B cell (primary cell): ENCODE measurements at regions of chr11 and their contacts with region 1.

Region 1: DNA sequence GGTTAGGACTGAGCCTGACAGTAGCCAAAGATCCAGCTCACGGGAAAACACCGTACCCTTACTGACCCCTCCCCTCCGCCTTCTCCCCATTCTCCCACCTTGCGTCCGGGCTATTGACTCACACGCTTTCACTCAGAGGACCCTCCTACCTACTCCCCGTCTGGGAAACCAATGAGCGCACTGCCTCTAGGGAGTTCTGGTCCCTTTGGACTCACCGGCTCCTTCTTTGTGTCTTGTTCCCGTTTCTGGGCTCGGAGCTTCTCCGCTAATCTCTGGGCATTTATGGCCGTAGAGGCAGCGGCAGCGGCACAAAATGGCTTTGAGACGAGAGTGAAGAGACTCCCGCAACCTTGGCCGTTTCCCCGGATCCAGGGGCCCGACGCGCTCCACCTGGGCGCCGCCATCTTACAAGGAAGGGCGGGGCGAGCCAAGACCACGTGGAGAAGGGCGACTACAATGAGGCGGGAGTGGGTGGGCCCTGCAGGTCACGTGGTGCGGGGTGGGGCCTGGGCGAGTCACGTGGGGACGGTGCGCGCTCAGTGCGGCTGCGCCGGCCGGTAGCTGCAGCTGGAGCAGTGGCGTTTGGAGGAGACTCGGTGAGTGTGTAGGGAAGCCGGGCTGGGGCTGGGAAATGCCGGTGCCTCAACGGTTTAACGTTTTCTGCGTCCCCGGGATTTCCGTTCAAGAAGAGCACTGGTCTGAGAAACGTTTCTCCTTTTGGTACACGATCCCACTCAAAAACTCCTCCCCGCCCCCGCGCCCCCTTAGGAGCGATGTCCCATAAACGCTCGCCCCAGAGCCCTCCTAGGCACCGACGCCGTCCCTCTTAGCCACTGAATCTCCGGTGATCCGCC is at the starts of genes FAM118B and RPUSD4:
- DNase-seq: peak; percentile 97
- ATAC-seq: peak; percentile 96
- H3K4me3 ChIP-seq: peak within 1 kb of the TSS; percentile 89 to 100 (median 99)
- H3K4me3 Mint-ChIP-seq: peak within 1 kb of the TSS; percentile 99
- H3K27ac ChIP-seq: peak within 1 kb of the TSS; percentile 72 to 86
- H3K27ac Mint-ChIP-seq: peak within 1 kb of the TSS; percentile 95
- H3K4me1 ChIP-seq: peaks cover 16 to 18% of the 10 kb centered on the region in 2 donors
- H3K4me1 Mint-ChIP-seq: peaks cover 29% of the 10 kb centered on the region
- H3K27me3 ChIP-seq: no peaks in the 10 kb centered on the region
- H3K27me3 Mint-ChIP-seq: no peaks in the 10 kb centered on the region
- CTCF ChIP-seq: no peak
- total RNA-seq, gene FAM118B: 12.8 and 14.1 TPM in 2 replicates
- total RNA-seq, gene RPUSD4: 48.8 and 50.4 TPM in 2 replicates

Region 2: GRCh38 chr11:125625630-125626287 is 585.7 kb before region 1 on chr11:
- CTCF ChIA-PET with region 1: no interaction called
- POLR2A ChIA-PET with region 1: no interaction called
- intact Hi-C with region 1: loop called (anchors 1 kb)
- DNase-seq: peak; percentile 90
- ATAC-seq: peak; percentile 90
- H3K4me3 ChIP-seq: peak overlapping the region; percentile 81 to 96 (median 94)
- H3K4me3 Mint-ChIP-seq: peak overlapping the region; percentile 95
- H3K27ac ChIP-seq: peak overlapping the region; percentile 97 to 98
- H3K27ac Mint-ChIP-seq: peak overlapping the region; percentile 98
- H3K4me1 ChIP-seq: peaks cover 11 to 18% of the 10 kb centered on the region in 2 donors
- H3K4me1 Mint-ChIP-seq: peaks cover 14% of the 10 kb centered on the region
- H3K27me3 ChIP-seq: no peaks in the 10 kb centered on the region
- H3K27me3 Mint-ChIP-seq: no peaks in the 10 kb centered on the region
- CTCF ChIP-seq: no peak

Region 3: DNA sequence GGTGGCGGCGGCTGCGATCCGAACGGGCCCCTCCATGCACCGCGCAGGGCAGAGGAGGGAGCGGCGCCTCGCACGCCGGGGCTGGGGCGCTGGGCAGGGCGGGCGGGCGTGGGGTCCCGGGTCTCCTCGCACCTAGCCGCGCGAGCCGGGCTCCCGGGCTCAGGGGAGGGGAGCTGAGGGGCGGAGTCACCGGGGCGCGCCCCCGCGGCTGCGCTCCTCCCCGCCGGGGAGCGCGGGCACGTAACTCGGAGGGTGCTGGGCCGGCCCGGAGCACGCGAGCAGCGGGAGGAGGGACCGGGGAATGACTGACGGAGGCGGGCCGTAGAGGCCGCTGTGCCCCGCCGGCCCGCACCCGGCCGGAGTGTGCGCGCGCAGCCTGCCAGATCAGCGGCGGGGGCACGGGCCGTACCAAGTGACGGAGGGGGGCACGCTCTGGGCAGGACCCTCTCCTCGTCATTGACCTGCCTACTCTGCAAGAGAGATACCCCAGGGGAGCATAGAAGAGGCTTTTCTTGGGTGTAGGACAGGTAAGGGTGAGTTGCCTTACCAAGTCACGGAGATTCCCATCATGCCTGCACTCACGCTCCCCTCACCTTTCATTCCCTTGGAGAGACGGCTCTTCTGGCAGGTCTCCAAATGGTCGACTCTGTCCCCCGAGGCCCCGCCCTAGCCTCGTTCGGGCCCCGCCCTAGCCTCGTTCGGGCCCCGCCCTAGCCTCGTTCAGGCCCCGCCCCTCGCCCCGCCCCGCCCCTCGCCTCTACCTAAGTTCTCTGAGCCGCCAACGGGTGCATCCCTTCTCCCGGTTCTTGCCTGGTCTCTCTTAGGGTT is 148.6 kb before region 1 on chr11 and contains the start of gene CDON:
- CTCF ChIA-PET with region 1: no interaction called
- POLR2A ChIA-PET with region 1: no interaction called
- intact Hi-C with region 1: loop called (anchors 1 kb)
- DNase-seq: peak; percentile 91
- ATAC-seq: peak; percentile 85
- H3K4me3 ChIP-seq: peak within 1 kb of the TSS; percentile 47 to 69 (median 62)
- H3K4me3 Mint-ChIP-seq: peak within 1 kb of the TSS; percentile 84
- H3K27ac ChIP-seq: no peak within 1 kb of the TSS
- H3K27ac Mint-ChIP-seq: peak within 1 kb of the TSS; percentile 62
- H3K4me1 ChIP-seq: peaks cover 8 to 10% of the 10 kb centered on the region in 2 donors
- H3K4me1 Mint-ChIP-seq: peaks cover 10% of the 10 kb centered on the region
- H3K27me3 ChIP-seq: peaks cover 0 to 29% (median 18%) of the 10 kb centered on the region in 4 experiments
- H3K27me3 Mint-ChIP-seq: peaks cover 52% of the 10 kb centered on the region
- CTCF ChIP-seq: no peak
- total RNA-seq, gene CDON: not detected in 2 replicates

Region 4: DNA sequence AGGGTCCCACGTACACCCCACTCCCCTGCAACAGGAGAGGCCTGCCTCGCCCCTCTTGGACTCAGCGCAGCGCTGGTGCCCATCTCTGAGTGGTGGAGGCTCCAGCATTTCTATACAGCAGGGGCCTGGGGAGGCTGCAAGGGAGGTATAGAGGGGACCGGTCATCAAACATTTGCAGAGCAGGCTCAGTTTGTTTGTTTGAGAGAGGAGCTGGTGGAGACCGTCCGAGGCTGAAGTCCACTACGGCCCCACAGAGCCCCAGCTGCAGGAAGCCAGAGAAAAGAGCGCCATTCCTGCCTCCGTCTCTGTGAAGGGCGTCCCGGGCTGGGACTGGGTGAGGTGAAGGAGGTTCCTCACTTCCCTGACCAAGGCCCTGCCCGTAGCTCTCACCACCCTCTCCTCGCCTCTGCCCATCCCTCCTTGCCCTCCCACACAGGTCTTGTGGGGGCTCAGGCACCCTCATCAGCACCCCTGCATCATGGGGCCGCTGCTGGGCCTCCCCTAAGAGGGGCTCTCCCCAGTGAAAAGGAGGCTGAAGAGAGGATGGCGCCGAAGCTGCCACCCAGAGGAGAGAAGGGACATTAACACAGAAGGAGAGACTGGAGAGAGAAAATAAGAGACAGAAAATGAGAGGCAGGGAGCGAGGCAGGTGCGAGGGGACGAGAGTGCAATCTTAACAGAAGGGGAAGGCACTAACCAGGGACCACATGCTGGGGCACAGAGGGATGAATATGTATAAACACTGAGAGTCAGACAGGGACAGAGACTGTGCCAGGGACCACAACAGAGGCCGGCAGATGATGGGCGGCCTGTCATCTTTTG is 24.5 kb before region 1 on chr11:
- CTCF ChIA-PET with region 1: no interaction called
- POLR2A ChIA-PET with region 1: no interaction called
- intact Hi-C with region 1: no loop called
- DNase-seq: no peak
- ATAC-seq: no peak
- H3K4me3 ChIP-seq: no peak overlapping the region
- H3K4me3 Mint-ChIP-seq: no peak overlapping the region
- H3K27ac ChIP-seq: no peak overlapping the region
- H3K27ac Mint-ChIP-seq: no peak overlapping the region
- H3K4me1 ChIP-seq: peaks cover 6 to 16% of the 10 kb centered on the region in 2 donors
- H3K4me1 Mint-ChIP-seq: peaks cover 22% of the 10 kb centered on the region
- H3K27me3 ChIP-seq: no peaks in the 10 kb centered on the region
- H3K27me3 Mint-ChIP-seq: no peaks in the 10 kb centered on the region
- CTCF ChIP-seq: no peak

Region 5: GRCh38 chr11:126282736-126283591 is 71.5 kb after region 1 on chr11 and contains the start of gene TIRAP:
- CTCF ChIA-PET with region 1: no interaction called
- POLR2A ChIA-PET with region 1: interaction called, 5 read pairs
- intact Hi-C with region 1: loop called (anchors 1 kb)
- DNase-seq: peak; percentile 77
- ATAC-seq: peak; percentile 77
- H3K4me3 ChIP-seq: peak within 1 kb of the TSS; percentile 56 to 87 (median 73)
- H3K4me3 Mint-ChIP-seq: peak within 1 kb of the TSS; percentile 100
- H3K27ac ChIP-seq: peak within 1 kb of the TSS; percentile 69 to 86
- H3K27ac Mint-ChIP-seq: peak within 1 kb of the TSS; percentile 95
- H3K4me1 ChIP-seq: peaks cover 17 to 31% of the 10 kb centered on the region in 2 donors
- H3K4me1 Mint-ChIP-seq: peaks cover 44% of the 10 kb centered on the region
- H3K27me3 ChIP-seq: no peaks in the 10 kb centered on the region
- H3K27me3 Mint-ChIP-seq: no peaks in the 10 kb centered on the region
- CTCF ChIP-seq: no peak
- total RNA-seq, gene TIRAP: 25.1 and 27.1 TPM in 2 replicates